ENCODE measurements at regions of chr5 and their contacts with region 1.

Region 1: DNA sequence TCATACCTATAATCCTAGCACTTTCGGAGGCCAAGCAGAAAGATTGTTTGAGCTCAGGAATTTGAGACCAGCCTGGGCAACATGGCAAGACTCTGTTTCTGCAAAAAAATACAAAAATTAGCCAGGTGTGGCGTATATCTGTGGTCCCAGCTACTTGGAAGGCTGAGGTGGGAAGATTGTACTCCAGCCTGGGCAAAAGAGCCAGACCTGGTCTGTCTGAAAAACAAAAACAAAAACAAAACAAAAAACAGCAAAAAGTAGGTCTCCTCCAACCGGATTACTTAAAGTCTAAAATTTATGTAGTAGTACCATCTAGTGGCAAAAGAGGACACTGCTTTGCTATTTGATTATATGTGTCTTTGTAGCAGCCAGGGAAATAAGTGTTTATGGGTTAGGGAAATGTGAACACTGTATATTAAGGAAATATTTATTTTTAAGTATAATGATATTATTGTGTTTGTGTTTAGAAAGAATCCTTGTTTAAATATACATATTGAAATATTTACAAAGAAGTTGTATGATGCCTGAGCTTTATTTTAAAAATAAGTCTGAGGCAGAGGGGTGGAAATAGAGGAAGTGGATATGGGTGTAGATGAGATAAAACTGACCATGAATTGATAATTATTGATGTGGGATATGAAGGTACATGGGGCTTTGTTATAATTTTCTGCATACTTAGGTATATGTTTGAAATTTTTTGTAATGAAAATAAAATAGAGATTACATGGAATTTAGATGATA is 20.0 kb downstream of the APC start:
- DNase-seq: peak; percentile 61
- H3K4me3 Mint-ChIP-seq: no peak overlapping the region
- H3K27ac Mint-ChIP-seq: no peak overlapping the region
- H3K4me1 Mint-ChIP-seq: peaks cover 21% of the 10 kb centered on the region
- H3K27me3 Mint-ChIP-seq: no peaks in the 10 kb centered on the region
- CTCF ChIP-seq: peak; percentile 68

Region 2: DNA sequence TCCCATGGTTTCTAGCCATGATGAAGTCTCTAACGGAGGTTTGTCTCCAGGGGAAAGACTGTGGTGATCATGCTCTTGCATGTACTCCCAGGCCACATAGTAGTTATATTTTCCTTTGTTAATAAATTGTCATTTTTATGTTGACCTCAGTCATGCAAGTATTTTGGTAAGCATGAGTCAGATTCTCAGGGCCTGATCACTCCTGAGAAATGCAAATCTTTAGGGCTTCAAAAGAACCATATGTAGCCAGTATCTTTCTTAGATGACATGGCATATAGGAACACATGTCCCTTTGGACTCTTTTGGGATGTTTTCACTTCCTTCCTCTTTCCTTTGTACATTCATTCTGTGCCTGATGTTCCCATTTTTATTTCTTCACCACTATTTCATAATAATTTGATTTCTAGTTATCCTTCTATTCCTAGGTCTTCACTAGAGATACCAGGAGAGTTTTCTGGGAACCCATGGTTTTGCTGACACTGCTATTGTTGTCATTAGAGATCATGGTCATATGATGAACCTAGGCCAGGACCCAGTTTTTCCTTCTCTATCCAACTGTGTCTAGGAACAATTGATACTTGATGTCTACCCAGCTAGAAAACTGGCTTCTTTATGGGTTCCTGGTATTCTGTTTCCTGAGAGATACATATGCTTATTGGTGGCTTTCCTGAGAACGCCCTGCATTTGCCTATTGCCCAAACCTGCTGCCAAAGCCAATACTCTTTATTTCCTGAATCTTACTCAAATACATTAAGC is 752.6 kb before region 1 on chr5:
- CTCF ChIA-PET with region 1: no interaction called
- POLR2A ChIA-PET with region 1: no interaction called
- intact Hi-C with region 1: no loop called
- DNase-seq: no peak
- H3K4me3 Mint-ChIP-seq: no peak overlapping the region
- H3K27ac Mint-ChIP-seq: no peak overlapping the region
- H3K4me1 Mint-ChIP-seq: peaks cover 12% of the 10 kb centered on the region
- H3K27me3 Mint-ChIP-seq: no peaks in the 10 kb centered on the region
- CTCF ChIP-seq: no peak

Region 3: GRCh38 chr5:112707187-112708102 is 50.2 kb before region 1 on chr5:
- CTCF ChIA-PET with region 1: no interaction called
- POLR2A ChIA-PET with region 1: interaction called, 4 read pairs
- intact Hi-C with region 1: loop called (anchors 5 kb)
- DNase-seq: peak; percentile 98
- H3K4me3 Mint-ChIP-seq: peak overlapping the region; percentile 99
- H3K27ac Mint-ChIP-seq: peak overlapping the region; percentile 90
- H3K4me1 Mint-ChIP-seq: peaks cover 29% of the 10 kb centered on the region
- H3K27me3 Mint-ChIP-seq: no peaks in the 10 kb centered on the region
- CTCF ChIP-seq: no peak

Region 4: DNA sequence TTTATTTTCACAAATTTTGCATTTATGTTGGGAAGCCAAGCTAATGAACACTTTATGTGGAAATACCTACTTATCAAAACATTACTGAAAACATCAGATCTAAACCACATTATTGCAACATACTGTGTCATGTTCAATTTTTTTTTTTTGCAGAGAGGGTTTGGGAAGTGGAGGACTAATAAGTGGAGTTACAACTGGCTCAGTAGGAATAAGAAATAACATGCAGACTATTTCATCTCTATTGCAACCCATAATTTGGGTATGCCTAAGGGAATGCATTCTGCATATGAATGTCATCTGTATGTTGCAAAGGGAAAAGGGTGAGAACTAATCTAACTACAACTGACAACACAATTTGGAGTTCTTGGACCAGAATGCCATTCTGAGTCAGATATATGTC is 21.9 kb after region 1 on chr5:
- CTCF ChIA-PET with region 1: interaction called, 12 read pairs
- POLR2A ChIA-PET with region 1: no interaction called
- intact Hi-C with region 1: no loop called
- DNase-seq: peak; percentile 61
- H3K4me3 Mint-ChIP-seq: no peak overlapping the region
- H3K27ac Mint-ChIP-seq: no peak overlapping the region
- H3K4me1 Mint-ChIP-seq: peaks cover 7% of the 10 kb centered on the region
- H3K27me3 Mint-ChIP-seq: no peaks in the 10 kb centered on the region
- CTCF ChIP-seq: no peak